Naive thymus-derived CD4-positive, alpha-beta T cell (primary cell): ENCODE measurements at regions of chr6 and their contacts with region 1.

Region 1: DNA sequence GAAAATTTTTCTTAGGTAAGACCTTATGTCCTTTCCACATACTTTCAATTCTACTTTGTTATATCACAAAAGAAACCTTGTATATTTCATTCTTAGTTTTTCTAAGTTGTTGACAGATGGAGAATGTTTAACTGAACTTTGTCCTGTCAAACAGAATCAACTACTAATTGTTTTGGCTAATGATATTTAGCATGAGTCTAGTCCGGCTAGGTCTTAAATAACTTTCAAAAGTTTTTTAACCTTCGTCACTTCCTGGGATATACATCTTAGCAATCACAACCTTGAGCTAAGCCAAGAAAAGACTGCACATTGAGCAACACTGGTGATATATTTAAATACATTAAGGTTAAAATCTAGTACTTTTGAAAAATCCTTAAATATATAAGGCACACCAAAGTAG is 62.9 kb upstream of the RUNX2 start:
- DNase-seq: no peak
- ATAC-seq: no peak
- H3K4me3 ChIP-seq: no peak overlapping the region
- H3K4me3 Mint-ChIP-seq: no peak overlapping the region
- H3K27ac ChIP-seq: no peak overlapping the region
- H3K27ac Mint-ChIP-seq: no peak overlapping the region
- H3K4me1 ChIP-seq: no peaks in the 10 kb centered on the region
- H3K4me1 Mint-ChIP-seq: peaks cover 3 to 24% (median 13%) of the 10 kb centered on the region in 7 donors
- H3K27me3 ChIP-seq: no peaks in the 10 kb centered on the region
- H3K27me3 Mint-ChIP-seq: no peaks in the 10 kb centered on the region

Region 2: DNA sequence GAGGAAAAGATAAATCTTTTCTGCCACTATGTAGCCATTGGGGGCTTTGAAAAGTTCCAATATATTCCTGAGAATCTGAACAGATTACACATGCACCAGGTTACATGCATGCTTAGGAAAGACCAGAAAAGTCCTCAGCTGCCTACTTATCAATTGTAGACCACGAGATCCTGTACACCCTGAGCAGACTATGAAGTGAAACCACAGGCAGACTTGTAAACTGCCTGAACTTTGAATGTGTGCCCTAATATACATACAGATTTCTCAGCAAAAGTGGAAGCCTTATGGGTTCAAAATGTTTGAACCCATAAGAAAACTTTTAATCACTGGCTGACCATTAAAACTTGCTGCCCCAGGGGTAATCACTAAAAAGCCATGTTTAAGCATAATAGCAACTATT is 210.6 kb before region 1 on chr6:
- CTCF ChIA-PET with region 1: no interaction called
- POLR2A ChIA-PET with region 1: no interaction called
- intact Hi-C with region 1: no loop called
- DNase-seq: peak in 1 of 9 donors; percentile 9
- ATAC-seq: peak; percentile 41
- H3K4me3 ChIP-seq: no peak overlapping the region
- H3K4me3 Mint-ChIP-seq: no peak overlapping the region
- H3K27ac ChIP-seq: no peak overlapping the region
- H3K27ac Mint-ChIP-seq: no peak overlapping the region
- H3K4me1 ChIP-seq: no peaks in the 10 kb centered on the region
- H3K4me1 Mint-ChIP-seq: peaks cover 7 to 45% (median 26%) of the 10 kb centered on the region in 7 donors
- H3K27me3 ChIP-seq: no peaks in the 10 kb centered on the region
- H3K27me3 Mint-ChIP-seq: no peaks in the 10 kb centered on the region

Region 3: DNA sequence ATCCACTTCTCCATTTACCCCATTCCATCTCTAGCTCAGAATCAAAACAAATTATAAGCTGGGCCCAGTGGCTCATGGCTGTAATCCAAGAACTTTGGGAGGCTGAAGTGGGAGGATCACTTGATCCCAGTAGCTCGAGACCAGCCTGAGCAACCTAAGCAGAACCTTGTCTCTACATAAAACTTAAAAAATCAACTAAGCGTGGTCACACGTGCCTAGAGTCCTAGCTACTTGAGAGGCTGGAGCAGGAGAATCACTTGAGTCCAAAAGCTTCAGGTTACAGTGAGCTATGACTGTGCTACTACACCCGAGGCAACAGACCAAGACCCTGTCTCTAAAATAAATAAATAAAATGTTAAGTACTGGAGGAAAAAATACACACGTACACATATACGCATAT is 11.8 kb before region 1 on chr6:
- CTCF ChIA-PET with region 1: no interaction called
- POLR2A ChIA-PET with region 1: interaction called, 3 read pairs
- intact Hi-C with region 1: loop called in 1 of 2 experiments (anchors 2 kb)
- DNase-seq: no peak
- ATAC-seq: no peak
- H3K4me3 ChIP-seq: no peak overlapping the region
- H3K4me3 Mint-ChIP-seq: no peak overlapping the region
- H3K27ac ChIP-seq: no peak overlapping the region
- H3K27ac Mint-ChIP-seq: no peak overlapping the region
- H3K4me1 ChIP-seq: no peaks in the 10 kb centered on the region
- H3K4me1 Mint-ChIP-seq: peaks cover 0 to 9% (median 5%) of the 10 kb centered on the region in 7 donors
- H3K27me3 ChIP-seq: no peaks in the 10 kb centered on the region
- H3K27me3 Mint-ChIP-seq: no peaks in the 10 kb centered on the region

Region 4: GRCh38 chr6:45278367-45278766 is 13.1 kb after region 1 on chr6:
- CTCF ChIA-PET with region 1: no interaction called
- POLR2A ChIA-PET with region 1: no interaction called
- intact Hi-C with region 1: no loop called
- DNase-seq: no peak
- ATAC-seq: no peak
- H3K4me3 ChIP-seq: no peak overlapping the region
- H3K4me3 Mint-ChIP-seq: no peak overlapping the region
- H3K27ac ChIP-seq: no peak overlapping the region
- H3K27ac Mint-ChIP-seq: no peak overlapping the region
- H3K4me1 ChIP-seq: no peaks in the 10 kb centered on the region
- H3K4me1 Mint-ChIP-seq: peaks cover 0 to 11% (median 4%) of the 10 kb centered on the region in 7 donors
- H3K27me3 ChIP-seq: no peaks in the 10 kb centered on the region
- H3K27me3 Mint-ChIP-seq: no peaks in the 10 kb centered on the region